ENCODE measurements at regions of chr7 and their contacts with region 1.

Region 1: GRCh38 chr7:106947244-106947728 is 82.2 kb downstream of the PIK3CG start:
- DNase-seq: peak; percentile 68
- ATAC-seq: peak; percentile 97
- H3K4me3 ChIP-seq: no peak overlapping the region
- H3K27ac ChIP-seq: no peak overlapping the region
- H3K4me1 ChIP-seq: no peaks in the 10 kb centered on the region
- H3K27me3 ChIP-seq: no peaks in the 10 kb centered on the region
- CTCF ChIP-seq: peak; percentile 67 to 78 (median 73)
- POLR2A ChIP-seq: no peak
- RAD21 ChIP-seq: peak; percentile 87

Region 2: GRCh38 chr7:106793015-106793975 is 154.0 kb before region 1 on chr7:
- CTCF ChIA-PET with region 1: interaction called, 6 read pairs
- POLR2A ChIA-PET with region 1: no interaction called
- RAD21 ChIA-PET with region 1: no interaction called
- intact Hi-C with region 1: loop called (anchors 1 kb)
- DNase-seq: peak; percentile 38
- ATAC-seq: peak; percentile 69
- H3K4me3 ChIP-seq: no peak overlapping the region
- H3K27ac ChIP-seq: no peak overlapping the region
- H3K4me1 ChIP-seq: no peaks in the 10 kb centered on the region
- H3K27me3 ChIP-seq: no peaks in the 10 kb centered on the region
- CTCF ChIP-seq: peak; percentile 57 to 78 (median 70); a peak in 5 of 6 replicates
- POLR2A ChIP-seq: no peak
- RAD21 ChIP-seq: peak; percentile 89

Region 3: DNA sequence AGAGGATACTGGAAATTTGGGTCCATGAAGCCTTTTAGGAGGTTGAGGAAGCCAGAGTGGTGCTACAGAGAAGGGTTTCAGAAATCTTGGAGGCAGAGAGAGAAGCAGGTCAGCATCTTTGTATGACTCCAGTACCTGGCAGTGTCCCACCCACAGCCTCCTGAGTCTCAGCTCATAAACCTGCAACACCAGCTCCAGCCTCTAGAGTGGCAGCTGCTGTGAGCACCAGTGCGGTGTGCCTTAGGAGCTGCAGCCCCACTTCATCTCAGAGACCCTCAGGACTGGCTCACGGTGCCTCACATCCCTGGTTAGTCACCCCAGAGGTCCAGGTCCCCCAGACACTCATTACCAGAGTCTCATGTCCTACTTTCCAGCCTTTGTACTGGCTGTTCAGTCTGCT is 12.5 kb after region 1 on chr7:
- CTCF ChIA-PET with region 1: interaction called, 14 read pairs
- POLR2A ChIA-PET with region 1: no interaction called
- RAD21 ChIA-PET with region 1: no interaction called
- intact Hi-C with region 1: no loop called
- DNase-seq: no peak
- ATAC-seq: peak; percentile 99
- H3K4me3 ChIP-seq: no peak overlapping the region
- H3K27ac ChIP-seq: no peak overlapping the region
- H3K4me1 ChIP-seq: no peaks in the 10 kb centered on the region
- H3K27me3 ChIP-seq: no peaks in the 10 kb centered on the region
- CTCF ChIP-seq: peak in 2 of 3 experiments; percentile 52 to 61; a peak in 3 of 6 replicates
- POLR2A ChIP-seq: no peak
- RAD21 ChIP-seq: no peak

Region 4: GRCh38 chr7:107224374-107225223 is 277.3 kb after region 1 on chr7:
- CTCF ChIA-PET with region 1: no interaction called
- POLR2A ChIA-PET with region 1: no interaction called
- RAD21 ChIA-PET with region 1: no interaction called
- intact Hi-C with region 1: no loop called
- DNase-seq: no peak
- ATAC-seq: no peak
- H3K4me3 ChIP-seq: no peak overlapping the region
- H3K27ac ChIP-seq: no peak overlapping the region
- H3K4me1 ChIP-seq: no peaks in the 10 kb centered on the region
- H3K27me3 ChIP-seq: no peaks in the 10 kb centered on the region
- CTCF ChIP-seq: no peak
- POLR2A ChIP-seq: no peak
- RAD21 ChIP-seq: no peak

Region 5: GRCh38 chr7:107474104-107474521 is 526.8 kb after region 1 on chr7:
- CTCF ChIA-PET with region 1: no interaction called
- POLR2A ChIA-PET with region 1: no interaction called
- RAD21 ChIA-PET with region 1: no interaction called
- intact Hi-C with region 1: no loop called
- DNase-seq: no peak
- ATAC-seq: no peak
- H3K4me3 ChIP-seq: no peak overlapping the region
- H3K27ac ChIP-seq: no peak overlapping the region
- H3K4me1 ChIP-seq: no peaks in the 10 kb centered on the region
- H3K27me3 ChIP-seq: no peaks in the 10 kb centered on the region
- CTCF ChIP-seq: no peak
- POLR2A ChIP-seq: no peak
- RAD21 ChIP-seq: no peak

Measured in HCT116 (cell line).